AG04450 (cell line): ENCODE measurements at regions of chr2 and their contacts with region 1.

Region 1: GRCh38 chr2:25376750-25377621 is 35.3 kb upstream of the DNMT3A start:
- DNase-seq: peak; percentile 41
- H3K4me3 ChIP-seq: peak overlapping the region; percentile 45
- H3K27ac ChIP-seq: no peak overlapping the region
- H3K27me3 ChIP-seq: no peaks in the 10 kb centered on the region
- CTCF ChIP-seq: peak; percentile 72

Region 2: DNA sequence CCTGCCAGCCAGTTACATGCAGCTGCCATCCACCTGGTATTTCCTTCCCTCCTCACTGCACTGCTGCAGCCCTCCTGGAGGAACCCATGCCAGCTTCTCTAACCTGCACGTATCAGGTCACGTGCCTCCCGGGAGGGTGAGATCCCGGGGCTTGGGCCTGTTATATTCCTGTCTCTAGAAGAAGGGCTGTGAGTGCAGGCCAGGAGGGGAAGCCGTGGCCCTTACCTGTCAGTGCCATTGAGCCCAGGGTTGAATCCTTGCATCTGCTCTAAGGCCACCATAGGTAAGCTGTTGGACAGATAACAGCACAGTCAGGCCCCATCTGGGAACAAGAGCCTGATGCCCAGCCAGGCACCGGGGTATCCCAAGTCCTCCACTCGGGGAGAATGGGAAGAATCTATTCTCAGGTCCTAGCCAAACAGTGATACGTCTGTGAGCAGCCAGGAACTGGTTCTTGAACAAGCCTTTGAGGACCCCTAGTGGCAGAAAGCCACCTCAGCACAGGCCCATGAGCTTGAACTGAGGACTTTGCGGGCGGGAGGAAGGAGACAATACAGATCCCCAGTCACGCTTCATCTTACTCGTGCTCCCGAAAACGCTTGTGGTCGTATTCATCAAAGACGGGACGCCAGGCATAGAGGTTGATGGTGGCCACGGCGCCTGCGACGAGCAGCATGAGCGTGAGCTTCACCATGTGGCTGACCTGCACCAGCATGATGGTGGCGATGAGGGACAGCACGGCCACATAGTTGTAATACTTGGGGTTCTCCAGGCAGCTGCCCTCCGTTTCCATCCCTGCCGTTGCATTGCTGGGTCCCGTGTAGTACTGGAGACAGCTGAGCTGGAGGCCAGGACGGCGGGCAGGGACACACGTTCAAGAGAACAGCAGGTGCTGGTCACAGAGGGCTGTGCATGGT is 549.4 kb before region 1 on chr2:
- CTCF ChIA-PET with region 1: no interaction called
- POLR2A ChIA-PET with region 1: no interaction called
- DNase-seq: peak; percentile 81
- H3K4me3 ChIP-seq: no peak overlapping the region
- H3K27ac ChIP-seq: no peak overlapping the region
- H3K27me3 ChIP-seq: no peaks in the 10 kb centered on the region
- CTCF ChIP-seq: peak; percentile 95

Region 3: DNA sequence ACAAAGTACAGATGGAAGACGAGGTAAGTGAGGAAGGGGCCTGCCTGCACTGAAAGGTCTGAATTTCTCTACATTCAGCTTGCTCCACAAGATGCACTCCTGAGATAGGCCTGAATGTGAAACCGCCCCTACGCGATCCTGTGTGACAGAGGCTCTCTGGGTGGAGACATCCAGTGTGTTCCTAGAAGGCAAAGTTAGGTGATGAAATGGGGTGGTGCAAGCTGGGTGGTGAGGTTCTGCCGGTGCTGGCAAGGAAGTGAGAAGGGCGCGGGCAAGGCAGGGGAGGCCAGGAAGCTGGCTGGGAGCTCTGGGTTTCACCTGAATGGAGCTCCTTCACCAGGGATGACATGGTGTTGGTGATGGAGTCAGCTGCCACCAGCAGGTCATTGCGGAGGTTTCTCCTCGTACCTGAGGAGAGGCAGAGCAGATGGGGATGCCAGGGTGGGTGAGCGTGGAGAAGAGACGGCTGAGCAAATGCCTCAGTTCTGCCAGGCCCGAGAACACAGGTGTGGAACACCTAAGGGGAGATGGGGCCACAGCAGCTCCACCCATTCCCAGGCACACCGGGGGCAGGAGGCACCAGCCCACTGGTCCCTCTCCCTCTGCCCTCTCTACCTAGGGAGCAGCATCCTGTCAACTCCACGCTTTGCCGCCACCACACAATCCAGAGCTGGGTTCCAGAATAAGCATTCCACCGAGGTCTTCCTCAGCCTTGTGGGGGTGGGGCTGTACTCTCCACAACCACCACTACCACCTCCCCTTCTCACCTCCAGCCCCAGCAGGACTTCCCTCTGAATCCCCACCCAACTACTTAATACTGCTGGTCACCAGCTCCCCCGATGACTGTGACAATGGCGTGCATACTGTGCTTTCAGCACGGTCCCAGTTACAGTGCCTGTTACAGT is 10.2 kb after region 1 on chr2:
- CTCF ChIA-PET with region 1: interaction called, 20 read pairs
- POLR2A ChIA-PET with region 1: no interaction called
- DNase-seq: no peak
- H3K4me3 ChIP-seq: no peak overlapping the region
- H3K27ac ChIP-seq: no peak overlapping the region
- H3K27me3 ChIP-seq: no peaks in the 10 kb centered on the region
- CTCF ChIP-seq: no peak

Region 4: DNA sequence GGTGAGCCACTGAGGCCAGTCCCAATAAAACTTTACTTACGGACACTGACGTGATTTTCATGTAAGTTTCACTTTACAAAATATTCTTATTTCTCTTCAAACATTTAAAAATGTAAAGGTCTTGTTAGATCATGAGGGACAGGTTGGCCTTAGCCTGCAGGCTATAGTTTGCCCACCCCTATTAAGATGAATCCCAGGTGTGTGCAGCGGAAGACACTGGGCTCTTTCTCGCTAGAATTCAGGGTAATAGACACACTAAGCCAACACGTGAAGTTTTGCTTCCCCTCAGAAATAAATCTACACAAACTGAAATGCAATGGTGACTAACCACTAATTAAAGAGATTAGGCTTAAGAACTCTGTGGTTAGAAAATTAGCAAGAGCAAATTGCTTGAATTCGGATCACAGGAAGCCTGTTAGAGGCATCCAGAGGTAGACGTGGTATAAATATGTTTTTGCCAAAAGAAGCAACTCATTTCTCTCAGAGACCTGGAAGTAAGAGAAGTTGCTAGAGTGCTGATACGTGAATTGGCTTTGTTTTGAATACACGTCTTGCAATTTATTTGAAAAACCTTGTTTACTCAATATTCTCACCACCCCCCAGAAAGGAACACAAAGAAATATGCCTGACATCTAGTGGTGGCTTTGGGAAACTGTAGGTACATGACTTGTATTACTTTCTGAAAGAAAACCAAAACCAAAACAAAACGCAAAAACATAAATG is 144.8 kb after region 1 on chr2:
- CTCF ChIA-PET with region 1: interaction called, 8 read pairs
- POLR2A ChIA-PET with region 1: interaction called, 11 read pairs
- DNase-seq: peak; percentile 48
- H3K4me3 ChIP-seq: peak overlapping the region; percentile 43; the same call in 1 of the 2 replicates
- H3K27ac ChIP-seq: no peak overlapping the region
- H3K27me3 ChIP-seq: no peaks in the 10 kb centered on the region
- CTCF ChIP-seq: peak; percentile 90